B cell (primary cell): ENCODE measurements at regions of chr1 and their contacts with region 1.

Region 1: DNA sequence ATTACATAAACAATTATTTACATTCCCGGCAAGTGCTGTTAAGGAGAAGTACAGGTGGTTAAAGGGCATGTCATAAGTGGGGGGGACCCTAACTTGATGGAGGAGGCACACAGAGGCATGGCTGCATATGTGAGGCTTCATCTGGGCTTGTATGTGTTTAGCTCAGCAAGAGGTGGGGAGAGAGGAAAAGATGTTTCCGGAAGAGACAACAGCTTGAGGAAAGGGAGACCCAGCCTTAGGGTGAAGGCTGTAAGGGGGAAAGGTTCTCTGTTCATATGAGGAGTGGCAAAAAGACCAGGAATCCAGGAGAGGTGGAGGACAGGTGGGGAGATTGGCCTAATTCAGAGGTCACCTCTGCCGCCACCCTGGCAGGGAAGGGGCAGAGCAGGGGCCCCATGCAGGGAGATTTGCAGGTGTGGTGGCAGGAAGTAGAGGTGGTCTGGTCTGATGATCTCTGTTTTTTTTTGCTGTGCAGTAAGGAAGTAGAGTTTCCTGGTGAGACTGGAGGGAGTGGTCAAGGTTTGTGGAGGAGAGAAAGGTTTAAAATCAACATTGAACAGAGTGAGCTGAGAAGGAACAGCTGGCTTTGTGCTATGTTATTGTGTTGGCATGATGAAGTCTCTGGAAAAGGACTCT is 9.0 kb downstream of the TRAF5 start:
- DNase-seq: peak; percentile 80
- ATAC-seq: peak; percentile 85
- H3K4me3 ChIP-seq: peak overlapping the region; percentile 17 to 54 (median 39)
- H3K4me3 Mint-ChIP-seq: peak overlapping the region; percentile 62
- H3K27ac ChIP-seq: peak overlapping the region; percentile 90 to 92
- H3K27ac Mint-ChIP-seq: peak overlapping the region; percentile 84
- H3K4me1 ChIP-seq: peaks cover 98 to 100% of the 10 kb centered on the region in 2 donors
- H3K4me1 Mint-ChIP-seq: peaks cover 92% of the 10 kb centered on the region
- H3K27me3 ChIP-seq: no peaks in the 10 kb centered on the region
- H3K27me3 Mint-ChIP-seq: no peaks in the 10 kb centered on the region
- CTCF ChIP-seq: no peak

Region 2: GRCh38 chr1:211280910-211281309 is 54.7 kb before region 1 on chr1:
- CTCF ChIA-PET with region 1: no interaction called
- POLR2A ChIA-PET with region 1: no interaction called
- intact Hi-C with region 1: no loop called
- DNase-seq: no peak
- ATAC-seq: no peak
- H3K4me3 ChIP-seq: no peak overlapping the region
- H3K4me3 Mint-ChIP-seq: no peak overlapping the region
- H3K27ac ChIP-seq: no peak overlapping the region
- H3K27ac Mint-ChIP-seq: no peak overlapping the region
- H3K4me1 ChIP-seq: no peaks in the 10 kb centered on the region
- H3K4me1 Mint-ChIP-seq: no peaks in the 10 kb centered on the region
- H3K27me3 ChIP-seq: no peaks in the 10 kb centered on the region
- H3K27me3 Mint-ChIP-seq: no peaks in the 10 kb centered on the region
- CTCF ChIP-seq: no peak

Region 3: DNA sequence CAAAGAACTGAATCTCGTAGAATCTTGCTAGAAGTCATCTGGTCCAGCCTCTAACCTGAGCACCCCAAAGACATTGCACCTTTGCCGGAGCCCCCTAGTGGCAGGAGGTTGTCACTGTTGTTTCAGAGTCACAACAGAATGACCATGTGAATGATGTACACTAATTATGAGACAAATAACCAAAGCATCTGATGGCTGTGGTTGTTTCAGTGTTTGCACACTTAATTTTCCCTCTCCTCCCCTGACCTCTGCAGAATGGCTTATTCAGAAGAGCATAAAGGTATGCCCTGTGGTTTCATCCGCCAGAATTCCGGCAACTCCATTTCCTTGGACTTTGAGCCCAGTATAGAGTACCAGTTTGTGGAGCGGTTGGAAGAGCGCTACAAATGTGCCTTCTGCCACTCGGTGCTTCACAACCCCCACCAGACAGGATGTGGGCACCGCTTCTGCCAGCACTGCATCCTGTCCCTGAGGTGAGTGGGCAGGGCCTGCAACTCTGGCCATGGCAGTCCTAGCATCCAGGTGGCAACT is 17.4 kb after region 1 on chr1:
- CTCF ChIA-PET with region 1: interaction called, 333 read pairs
- POLR2A ChIA-PET with region 1: interaction called, 3 read pairs
- intact Hi-C with region 1: loop called (anchors 1 kb)
- DNase-seq: peak; percentile 74
- ATAC-seq: peak; percentile 82
- H3K4me3 ChIP-seq: peak overlapping the region in 2 of 5 experiments; percentile 28 to 55
- H3K4me3 Mint-ChIP-seq: peak overlapping the region; percentile 81
- H3K27ac ChIP-seq: peak overlapping the region; percentile 40 to 75
- H3K27ac Mint-ChIP-seq: peak overlapping the region; percentile 91
- H3K4me1 ChIP-seq: peaks cover 56 to 58% of the 10 kb centered on the region in 2 donors
- H3K4me1 Mint-ChIP-seq: peaks cover 67% of the 10 kb centered on the region
- H3K27me3 ChIP-seq: no peaks in the 10 kb centered on the region
- H3K27me3 Mint-ChIP-seq: no peaks in the 10 kb centered on the region
- CTCF ChIP-seq: peak; percentile 79

Region 4: GRCh38 chr1:211589782-211590721 is 254.4 kb after region 1 on chr1:
- CTCF ChIA-PET with region 1: no interaction called
- POLR2A ChIA-PET with region 1: no interaction called
- intact Hi-C with region 1: no loop called
- DNase-seq: peak; percentile 21
- ATAC-seq: no peak
- H3K4me3 ChIP-seq: no peak overlapping the region
- H3K4me3 Mint-ChIP-seq: no peak overlapping the region
- H3K27ac ChIP-seq: no peak overlapping the region
- H3K27ac Mint-ChIP-seq: no peak overlapping the region
- H3K4me1 ChIP-seq: peaks cover 7 to 11% of the 10 kb centered on the region in 2 donors
- H3K4me1 Mint-ChIP-seq: peaks cover 8% of the 10 kb centered on the region
- H3K27me3 ChIP-seq: no peaks in the 10 kb centered on the region
- H3K27me3 Mint-ChIP-seq: peaks cover 17% of the 10 kb centered on the region
- CTCF ChIP-seq: no peak